ENCODE measurements at regions of chr16 and their contacts with region 1.

Region 1: DNA sequence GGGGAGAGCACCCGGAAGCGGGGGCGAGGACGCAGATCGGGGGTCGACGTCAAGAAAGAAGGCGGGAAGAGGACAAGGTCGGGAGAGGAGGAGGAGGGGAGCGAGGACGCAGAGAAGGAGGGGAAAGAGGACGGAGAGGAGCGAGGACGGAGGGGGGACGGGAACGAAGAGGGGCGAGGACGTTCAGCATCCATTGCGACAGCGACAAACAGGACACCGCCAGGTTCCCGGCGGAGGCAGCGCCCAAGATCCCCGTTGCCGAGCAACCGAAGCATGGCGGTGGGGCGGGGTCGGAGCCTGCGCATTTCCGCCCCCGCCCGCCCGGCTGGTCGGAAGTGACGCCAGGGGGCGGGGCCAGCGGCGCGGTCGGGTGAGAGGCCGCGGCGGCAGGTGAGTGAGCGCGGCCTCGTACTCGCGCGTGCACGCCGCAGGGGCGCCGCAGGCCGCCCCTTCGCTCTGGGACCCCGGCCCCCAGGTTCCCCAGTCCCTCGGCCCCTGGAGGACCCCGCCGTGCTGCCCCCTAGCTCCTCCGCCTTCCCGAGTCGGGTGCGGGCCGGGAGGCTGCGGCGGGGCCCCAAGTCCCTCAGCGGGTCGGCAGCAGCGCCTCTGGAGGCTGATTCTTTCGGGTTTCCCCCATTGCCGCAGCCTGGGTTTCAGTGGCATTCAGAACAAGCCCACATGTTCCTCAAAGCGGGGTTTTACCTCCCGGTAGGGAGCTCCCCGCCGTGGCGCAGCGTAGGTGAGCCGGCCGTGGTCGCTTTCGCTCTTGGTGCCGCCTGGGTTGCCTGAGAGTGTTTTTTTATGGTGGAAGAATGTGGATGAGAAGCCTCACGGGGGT is at the start of gene FAM234A:
- DNase-seq: peak; percentile 98
- ATAC-seq: peak; percentile 91
- H3K4me3 Mint-ChIP-seq: peak within 1 kb of the TSS; percentile 90
- H3K27ac Mint-ChIP-seq: peak within 1 kb of the TSS; percentile 96
- H3K4me1 Mint-ChIP-seq: peaks cover 17% of the 10 kb centered on the region
- H3K27me3 Mint-ChIP-seq: no peaks in the 10 kb centered on the region
- total RNA-seq, gene FAM234A: 11.3 to 15.2 TPM

Region 2: DNA sequence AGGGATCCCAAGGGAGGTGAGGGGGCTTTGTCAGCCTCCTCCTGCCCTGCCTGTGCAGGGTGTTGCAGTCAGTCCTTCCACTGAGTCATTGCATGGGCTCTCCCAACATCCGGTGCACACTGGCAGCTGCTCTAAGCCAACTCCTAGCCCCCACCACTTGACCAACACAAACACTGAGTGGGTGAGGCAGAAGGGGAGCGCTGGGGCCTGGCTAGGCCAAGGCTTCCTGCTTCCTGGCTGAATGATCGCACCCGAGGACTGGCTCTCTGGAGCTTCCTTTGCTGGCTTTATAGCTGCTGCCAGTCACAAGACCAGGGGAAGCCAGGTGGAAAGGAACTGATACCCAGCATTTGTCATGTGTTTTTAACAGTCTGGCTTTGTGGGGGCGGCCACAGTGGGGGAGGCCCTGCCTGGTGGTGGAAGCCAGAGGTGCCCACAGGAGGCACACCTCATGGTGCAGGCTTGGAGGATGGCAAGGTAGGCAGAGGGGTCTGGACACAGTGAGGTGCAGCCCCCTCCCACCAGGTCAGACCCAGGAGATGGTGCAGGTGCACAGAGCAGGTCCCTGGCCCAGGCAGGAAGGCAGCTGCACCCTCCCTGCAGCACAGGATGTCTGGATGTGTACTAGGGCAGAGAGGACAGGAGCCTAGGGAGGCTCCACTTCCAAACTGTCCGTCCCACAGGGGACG is 149.8 kb before region 1 on chr16:
- CTCF ChIA-PET with region 1: no interaction called
- POLR2A ChIA-PET with region 1: no interaction called
- intact Hi-C with region 1: loop called in 1 of 2 experiments (anchors 1 kb)
- DNase-seq: peak; percentile 85
- ATAC-seq: peak; percentile 92
- H3K4me3 Mint-ChIP-seq: peak overlapping the region; percentile 32
- H3K27ac Mint-ChIP-seq: peak overlapping the region; percentile 87
- H3K4me1 Mint-ChIP-seq: peaks cover 31% of the 10 kb centered on the region
- H3K27me3 Mint-ChIP-seq: no peaks in the 10 kb centered on the region

Region 3: DNA sequence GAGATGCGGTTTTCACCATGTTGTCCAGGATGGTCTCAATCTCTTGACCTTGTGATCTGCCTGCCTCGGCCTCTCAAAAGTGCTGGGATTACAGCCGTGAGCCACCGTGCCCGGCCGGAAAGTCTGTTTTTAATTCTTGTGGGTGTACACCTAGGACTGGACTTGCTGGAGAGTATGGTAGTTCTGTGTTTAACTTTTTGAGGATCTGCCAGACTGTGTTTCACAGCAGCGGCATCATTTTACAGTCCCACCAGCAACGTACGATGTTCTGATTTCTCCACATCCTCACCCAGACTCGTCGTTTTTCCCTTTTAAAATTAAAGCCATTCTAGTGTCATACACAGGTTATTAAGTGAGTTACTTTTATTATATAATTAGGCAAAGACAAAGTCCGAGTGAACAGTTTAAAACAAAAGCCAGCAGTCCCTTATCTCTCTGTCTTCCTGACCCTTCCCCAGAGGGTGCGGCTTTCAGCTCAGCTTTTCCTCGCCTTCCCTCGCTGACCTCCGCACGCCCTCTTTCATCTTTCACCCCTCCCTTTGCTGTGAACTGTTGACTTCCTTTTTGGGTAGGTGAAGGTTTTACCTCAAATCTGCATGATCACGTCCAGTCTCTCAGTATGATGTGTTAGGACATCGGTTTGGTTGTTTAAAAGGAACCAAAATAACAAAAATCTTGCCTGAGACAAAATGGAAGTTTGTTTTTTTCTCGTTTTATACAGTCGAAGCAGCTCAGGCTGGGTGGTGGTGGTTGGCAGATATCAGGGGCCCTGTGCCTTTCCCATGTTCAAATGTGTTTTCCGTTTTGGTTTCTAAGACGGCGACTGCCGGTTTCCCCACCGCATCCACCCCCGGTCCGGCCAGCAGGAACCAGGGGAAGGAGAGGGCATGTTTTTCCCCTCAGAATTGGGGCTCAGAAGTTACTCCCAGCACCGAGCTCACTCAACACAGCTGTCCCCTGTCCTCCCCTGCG is 18.0 kb after region 1 on chr16:
- CTCF ChIA-PET with region 1: interaction called, 16 read pairs
- POLR2A ChIA-PET with region 1: interaction called, 13 read pairs
- intact Hi-C with region 1: loop called in 1 of 2 experiments (anchors 1 kb)
- DNase-seq: peak; percentile 68
- ATAC-seq: peak; percentile 84
- H3K4me3 Mint-ChIP-seq: peak overlapping the region; percentile 56
- H3K27ac Mint-ChIP-seq: peak overlapping the region; percentile 85
- H3K4me1 Mint-ChIP-seq: peaks cover 34% of the 10 kb centered on the region
- H3K27me3 Mint-ChIP-seq: no peaks in the 10 kb centered on the region

Region 4: DNA sequence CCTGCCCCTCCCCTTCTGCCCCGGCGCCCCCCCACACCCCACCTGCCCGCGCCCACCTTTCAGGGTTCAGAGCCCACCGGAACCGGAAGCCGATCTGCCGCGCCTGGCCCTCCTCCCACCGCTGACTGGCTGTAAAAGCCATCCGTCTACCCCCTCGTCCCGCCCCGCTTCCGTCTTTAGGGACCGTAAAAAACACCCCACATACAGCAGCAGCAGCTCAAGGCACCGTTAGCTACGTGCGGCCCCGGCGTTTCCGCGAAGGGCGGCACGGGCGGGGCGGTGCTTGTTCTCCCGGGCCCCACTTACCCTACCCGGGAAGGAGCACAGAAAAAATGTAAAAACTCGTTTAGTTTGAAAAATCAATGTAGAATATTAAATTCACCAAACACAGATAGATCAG is 135.8 kb after region 1 on chr16 and contains the start of gene MRPL28:
- CTCF ChIA-PET with region 1: interaction called, 3 read pairs
- POLR2A ChIA-PET with region 1: no interaction called
- intact Hi-C with region 1: loop called in 1 of 2 experiments (anchors 1 kb)
- DNase-seq: peak; percentile 97
- ATAC-seq: peak; percentile 100
- H3K4me3 Mint-ChIP-seq: peak within 1 kb of the TSS; percentile 78
- H3K27ac Mint-ChIP-seq: peak within 1 kb of the TSS; percentile 92
- H3K4me1 Mint-ChIP-seq: peaks cover 17% of the 10 kb centered on the region
- H3K27me3 Mint-ChIP-seq: no peaks in the 10 kb centered on the region
- total RNA-seq, gene MRPL28: 90.2 to 94.4 TPM

Region 5: GRCh38 chr16:381789-382717 is 147.4 kb after region 1 on chr16 and contains the start of gene PGAP6:
- CTCF ChIA-PET with region 1: interaction called, 4 read pairs
- POLR2A ChIA-PET with region 1: interaction called, 3 read pairs
- intact Hi-C with region 1: loop called in 1 of 2 experiments (anchors 1 kb)
- DNase-seq: peak; percentile 83
- ATAC-seq: peak; percentile 73
- H3K4me3 Mint-ChIP-seq: peak within 1 kb of the TSS; percentile 74
- H3K27ac Mint-ChIP-seq: no peak within 1 kb of the TSS
- H3K4me1 Mint-ChIP-seq: peaks cover 24% of the 10 kb centered on the region
- H3K27me3 Mint-ChIP-seq: no peaks in the 10 kb centered on the region
- total RNA-seq, gene PGAP6: 22.9 to 40.8 TPM

Region 6: DNA sequence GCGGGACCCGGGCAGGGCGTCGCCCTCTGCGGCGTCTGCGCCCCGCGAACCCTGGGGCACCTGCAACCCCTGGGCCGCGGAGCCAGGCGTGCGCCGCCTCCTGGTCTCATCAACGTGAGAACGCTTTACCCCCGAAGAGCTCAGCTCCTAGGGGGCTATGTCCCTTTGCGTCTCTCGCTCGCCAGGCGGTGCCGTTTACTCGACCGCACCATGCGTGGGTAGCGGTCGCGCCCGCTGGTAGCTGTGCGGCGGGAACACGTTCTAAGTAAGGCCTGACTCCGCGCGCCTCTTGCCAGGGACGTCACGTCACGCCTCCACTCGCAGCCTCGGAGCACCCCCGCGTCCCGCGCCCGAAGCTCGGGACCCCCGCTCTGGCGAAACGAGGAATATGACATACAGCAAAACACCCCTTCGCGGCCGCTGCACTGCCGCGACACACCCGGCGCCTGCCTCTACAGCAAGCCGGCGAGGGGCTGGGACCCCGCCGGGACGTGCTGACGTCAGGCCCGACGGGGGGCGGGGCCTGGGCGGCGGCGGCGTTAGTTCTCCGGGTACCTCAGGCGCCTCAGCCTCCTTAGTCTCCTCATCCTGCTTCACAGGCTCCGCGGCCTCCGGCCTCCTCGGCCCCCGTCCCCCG is 190.5 kb after region 1 on chr16 and contains the start of gene RAB11FIP3:
- CTCF ChIA-PET with region 1: interaction called, 3 read pairs
- POLR2A ChIA-PET with region 1: no interaction called
- intact Hi-C with region 1: loop called in 1 of 2 experiments (anchors 1 kb)
- DNase-seq: peak; percentile 90
- ATAC-seq: peak; percentile 93
- H3K4me3 Mint-ChIP-seq: peak within 1 kb of the TSS; percentile 74
- H3K27ac Mint-ChIP-seq: peak within 1 kb of the TSS; percentile 47
- H3K4me1 Mint-ChIP-seq: peaks cover 30% of the 10 kb centered on the region
- H3K27me3 Mint-ChIP-seq: peaks cover 5% of the 10 kb centered on the region
- total RNA-seq, gene RAB11FIP3: 14.2 to 17.0 TPM

Measured in activated CD4-positive, alpha-beta T cell treated with anti-CD3 and anti-CD28 coated beads for 36 hours (primary cell).